ENCODE measurements at regions of chr20 and their contacts with region 1.

Region 1: DNA sequence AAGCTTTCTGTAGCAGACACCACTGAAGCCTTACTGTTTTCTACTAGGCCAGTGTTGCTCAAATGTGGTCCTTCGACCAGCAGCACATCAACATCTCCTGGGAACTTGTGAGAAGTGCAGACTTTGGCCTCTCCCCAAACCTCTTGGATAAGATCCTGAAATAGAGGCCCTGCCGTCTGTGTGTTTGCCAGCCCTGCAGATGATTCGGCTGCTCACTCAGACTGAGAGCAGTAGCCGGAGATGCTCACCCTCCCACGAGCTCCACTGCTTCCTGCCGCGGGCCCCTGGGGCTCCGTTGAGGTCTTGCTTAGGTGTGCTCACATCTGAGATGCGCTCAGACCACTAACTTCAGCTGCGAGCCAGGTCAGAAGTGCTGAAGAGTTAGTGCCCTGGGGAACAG is 129.5 kb upstream of the SSTR4 start:
- DNase-seq: peak; percentile 41 to 60
- ATAC-seq: peak; percentile 75 to 89 (median 84)
- H3K4me3 ChIP-seq: no peak overlapping the region
- H3K27ac ChIP-seq: no peak overlapping the region
- H3K4me1 ChIP-seq: peaks cover 0 to 16% (median 7%) of the 10 kb centered on the region in 9 donors
- H3K27me3 ChIP-seq: peaks cover 0 to 42% (median 0%) of the 10 kb centered on the region in 7 donors
- CTCF ChIP-seq: no peak

Region 2: DNA sequence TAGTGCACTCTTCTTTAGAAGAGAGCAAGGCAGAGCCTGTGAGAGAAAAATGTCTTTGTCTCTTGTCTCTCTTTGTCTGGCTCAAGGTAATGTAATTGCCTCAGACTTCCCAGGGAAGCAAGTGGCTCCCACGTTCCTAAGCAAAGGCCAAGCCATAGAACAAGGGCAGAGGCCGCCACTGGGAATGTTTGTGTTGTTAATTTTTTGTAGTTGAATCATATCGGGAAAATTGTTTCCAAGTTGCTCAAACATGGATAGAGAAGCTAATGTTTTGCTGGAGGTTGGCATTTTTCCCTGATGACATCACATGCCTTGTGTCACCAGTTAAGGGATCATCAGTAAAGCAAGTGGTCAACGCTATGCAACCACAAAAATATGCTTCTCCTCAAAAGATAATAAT is 109.8 kb before region 1 on chr20:
- intact Hi-C with region 1: loop called in 1 of 10 experiments (anchors 10 kb)
- DNase-seq: peak; percentile 19 to 60
- ATAC-seq: peak; percentile 56 to 86 (median 75)
- H3K4me3 ChIP-seq: no peak overlapping the region
- H3K27ac ChIP-seq: peak overlapping the region in 9 of 10 donors; percentile 8 to 74 (median 57)
- H3K4me1 ChIP-seq: peaks cover 0 to 54% (median 11%) of the 10 kb centered on the region in 9 donors
- H3K27me3 ChIP-seq: peaks cover 0 to 9% (median 0%) of the 10 kb centered on the region in 7 donors
- CTCF ChIP-seq: no peak

Region 3: GRCh38 chr20:22836877-22837276 is 68.8 kb before region 1 on chr20:
- intact Hi-C with region 1: no loop called
- DNase-seq: no peak
- ATAC-seq: peak in 1 of 8 donors; percentile 25
- H3K4me3 ChIP-seq: no peak overlapping the region
- H3K27ac ChIP-seq: no peak overlapping the region
- H3K4me1 ChIP-seq: no peaks in the 10 kb centered on the region
- H3K27me3 ChIP-seq: peaks cover 0 to 4% (median 0%) of the 10 kb centered on the region in 7 donors
- CTCF ChIP-seq: no peak